ENCODE measurements at regions of chr11 and their contacts with region 1.

Region 1: GRCh38 chr11:95705485-95706124 is 84.0 kb downstream of the FAM76B start:
- DNase-seq: peak; percentile 90 to 94
- H3K4me3 ChIP-seq: no peak overlapping the region
- H3K27ac ChIP-seq: peak overlapping the region; percentile 79 to 81
- H3K4me1 ChIP-seq: peaks cover 0 to 65% (median 33%) of the 10 kb centered on the region in 4 donors
- H3K27me3 ChIP-seq: no peaks in the 10 kb centered on the region
- CTCF ChIP-seq: peak; percentile 91 to 94

Region 2: DNA sequence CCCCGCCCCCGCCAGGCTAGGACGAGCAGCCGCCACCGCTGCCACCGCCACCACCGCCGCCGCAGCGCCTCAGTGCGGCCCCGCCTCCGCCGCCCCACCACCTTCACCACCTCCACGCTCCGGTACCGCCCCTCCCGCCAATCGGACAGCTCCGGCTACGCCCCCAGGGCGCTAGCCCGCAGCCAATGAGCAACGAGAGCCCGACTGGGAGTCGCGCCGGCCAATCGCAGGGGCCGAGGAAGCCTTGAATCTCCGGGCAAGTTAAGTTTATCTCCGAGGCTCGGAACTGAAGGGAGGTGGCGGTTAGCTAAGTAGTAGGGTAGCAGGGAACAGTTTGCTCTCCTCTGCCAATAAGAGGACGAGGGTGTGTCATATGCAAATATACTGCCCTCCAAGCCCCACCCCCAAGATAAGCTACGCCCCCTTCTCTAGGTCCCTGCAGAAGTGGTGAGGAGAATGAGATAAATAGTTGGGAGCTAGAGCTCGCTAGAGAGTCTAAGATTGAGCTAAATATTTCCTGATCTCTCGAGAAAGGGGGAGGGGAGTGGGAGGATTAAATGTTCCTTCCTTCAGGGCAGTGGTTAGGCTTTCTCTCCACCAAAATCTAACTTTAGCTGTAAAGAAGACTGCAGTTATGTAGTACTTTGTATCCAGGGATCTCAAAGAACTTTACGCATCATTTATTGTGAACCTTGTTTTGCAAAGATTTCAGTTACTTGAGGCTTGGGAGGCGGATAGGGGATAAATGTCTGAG is 474.3 kb before region 1 on chr11 and contains the start of gene SESN3:
- intact Hi-C with region 1: loop called (anchors 5 kb)
- DNase-seq: peak; percentile 99
- H3K4me3 ChIP-seq: peak within 1 kb of the TSS; percentile 96 to 97
- H3K27ac ChIP-seq: peak within 1 kb of the TSS; percentile 93 to 94
- H3K4me1 ChIP-seq: peaks cover 0 to 39% (median 19%) of the 10 kb centered on the region in 4 donors
- H3K27me3 ChIP-seq: no peaks in the 10 kb centered on the region
- CTCF ChIP-seq: no peak

Region 3: DNA sequence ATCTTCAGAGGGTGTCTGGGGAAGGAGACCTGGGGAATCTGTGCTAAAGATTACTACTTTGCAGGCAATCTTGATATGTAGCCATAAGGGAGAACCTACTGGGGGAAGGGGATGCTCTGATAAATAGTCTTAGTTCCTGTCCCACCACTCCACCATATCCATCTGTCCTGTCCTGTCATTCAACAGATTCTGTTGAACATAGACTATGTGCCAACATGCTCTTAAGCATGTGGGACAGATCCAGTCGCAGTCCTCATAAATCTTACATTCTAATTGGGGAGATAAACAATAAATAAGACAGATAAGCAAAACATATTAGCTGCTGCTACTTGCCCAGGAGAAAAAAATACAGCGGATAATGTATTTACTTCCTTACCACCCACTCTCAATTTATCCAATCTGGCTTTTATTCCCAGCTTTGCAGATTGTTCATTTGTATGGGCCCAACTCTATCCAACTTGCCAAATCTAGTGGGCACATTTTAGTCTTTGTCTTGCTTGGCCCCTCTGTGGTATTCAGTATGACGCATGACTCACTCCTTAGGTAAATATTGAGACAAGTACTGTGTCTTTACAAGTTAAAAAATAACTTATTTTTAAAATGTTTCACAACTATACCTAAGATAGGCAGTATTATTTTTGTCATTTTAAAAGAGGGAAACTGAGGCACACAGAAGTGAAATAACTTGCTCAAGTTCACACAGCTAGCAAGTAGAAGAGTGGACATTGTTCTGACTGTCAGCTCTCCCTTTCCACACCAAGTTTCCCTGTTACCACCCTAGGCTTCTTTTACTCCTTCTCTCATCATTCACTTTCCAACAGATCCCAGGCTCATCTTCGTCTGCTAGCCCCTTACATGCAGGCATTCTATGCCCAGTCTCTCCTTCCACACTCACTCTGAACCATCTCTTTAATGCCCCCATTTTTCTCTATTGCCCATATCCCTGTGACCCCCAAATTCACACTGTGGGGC is 341.0 kb before region 1 on chr11:
- intact Hi-C with region 1: loop called (anchors 10 kb)
- DNase-seq: no peak
- H3K4me3 ChIP-seq: no peak overlapping the region
- H3K27ac ChIP-seq: peak overlapping the region; percentile 36 to 49
- H3K4me1 ChIP-seq: peaks cover 0 to 51% (median 19%) of the 10 kb centered on the region in 4 donors
- H3K27me3 ChIP-seq: no peaks in the 10 kb centered on the region
- CTCF ChIP-seq: no peak

Region 4: GRCh38 chr11:95625164-95625900 is 80.3 kb before region 1 on chr11:
- intact Hi-C with region 1: no loop called
- DNase-seq: no peak
- H3K4me3 ChIP-seq: no peak overlapping the region
- H3K27ac ChIP-seq: peak overlapping the region; percentile 11 to 36
- H3K4me1 ChIP-seq: no peaks in the 10 kb centered on the region
- H3K27me3 ChIP-seq: no peaks in the 10 kb centered on the region
- CTCF ChIP-seq: no peak

Region 5: GRCh38 chr11:95991545-95991944 is 285.9 kb after region 1 on chr11:
- intact Hi-C with region 1: no loop called
- DNase-seq: no peak
- H3K4me3 ChIP-seq: no peak overlapping the region
- H3K27ac ChIP-seq: peak overlapping the region; percentile 48 to 58
- H3K4me1 ChIP-seq: peaks cover 0 to 32% (median 16%) of the 10 kb centered on the region in 4 donors
- H3K27me3 ChIP-seq: no peaks in the 10 kb centered on the region
- CTCF ChIP-seq: no peak

Measured in tibial artery (tissue), 4 donors.